ENCODE measurements at regions of chr1 and their contacts with region 1.

Region 1: GRCh38 chr1:204941421-204942338 is 71.0 kb downstream of the NFASC start:
- DNase-seq: peak; percentile 76
- H3K4me3 ChIP-seq: no peak overlapping the region
- H3K27ac ChIP-seq: no peak overlapping the region
- H3K4me1 ChIP-seq: no peaks in the 10 kb centered on the region
- H3K27me3 ChIP-seq: no peaks in the 10 kb centered on the region
- CTCF ChIP-seq: peak; percentile 91

Region 2: DNA sequence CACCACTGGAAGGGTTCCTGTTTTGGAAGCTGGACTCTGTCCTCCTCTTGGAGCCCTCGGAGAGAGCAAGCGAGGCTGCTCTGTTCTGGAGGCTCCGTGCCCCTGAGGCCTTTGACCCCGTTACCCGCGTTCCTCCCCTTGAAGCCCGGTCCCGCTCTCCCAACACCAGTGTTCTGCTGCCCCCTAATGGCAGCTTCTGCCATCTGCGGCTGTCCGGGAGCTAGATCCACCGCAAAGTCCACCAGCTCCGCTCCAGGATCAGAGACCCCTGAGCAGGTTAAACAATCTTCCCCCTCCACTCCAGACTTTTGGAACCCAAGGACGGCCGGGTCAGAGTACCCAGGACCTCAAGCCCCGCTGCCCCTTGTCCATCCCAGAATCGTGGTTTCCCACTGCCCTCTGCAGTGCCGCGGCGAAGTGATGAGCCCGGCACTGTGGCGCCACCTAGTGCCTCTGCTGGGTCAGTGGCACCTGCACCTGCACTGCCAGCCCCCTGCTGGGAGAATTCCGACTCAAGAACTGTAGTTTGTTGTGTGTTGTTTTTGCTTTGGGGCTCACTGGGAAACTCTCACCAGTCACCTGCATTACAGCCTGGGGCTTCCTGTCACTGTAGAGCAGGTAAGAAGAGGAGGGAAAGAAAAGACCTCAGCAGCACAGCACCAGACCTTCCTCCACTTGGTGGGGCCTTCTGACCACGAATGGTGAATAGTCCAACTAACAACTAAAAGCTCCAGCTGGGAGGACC is 134.6 kb before region 1 on chr1:
- intact Hi-C with region 1: loop called (anchors 2 kb)
- DNase-seq: peak; percentile 87
- H3K4me3 ChIP-seq: peak overlapping the region; percentile 26
- H3K27ac ChIP-seq: no peak overlapping the region
- H3K4me1 ChIP-seq: no peaks in the 10 kb centered on the region
- H3K27me3 ChIP-seq: no peaks in the 10 kb centered on the region
- CTCF ChIP-seq: peak; percentile 95

Region 3: DNA sequence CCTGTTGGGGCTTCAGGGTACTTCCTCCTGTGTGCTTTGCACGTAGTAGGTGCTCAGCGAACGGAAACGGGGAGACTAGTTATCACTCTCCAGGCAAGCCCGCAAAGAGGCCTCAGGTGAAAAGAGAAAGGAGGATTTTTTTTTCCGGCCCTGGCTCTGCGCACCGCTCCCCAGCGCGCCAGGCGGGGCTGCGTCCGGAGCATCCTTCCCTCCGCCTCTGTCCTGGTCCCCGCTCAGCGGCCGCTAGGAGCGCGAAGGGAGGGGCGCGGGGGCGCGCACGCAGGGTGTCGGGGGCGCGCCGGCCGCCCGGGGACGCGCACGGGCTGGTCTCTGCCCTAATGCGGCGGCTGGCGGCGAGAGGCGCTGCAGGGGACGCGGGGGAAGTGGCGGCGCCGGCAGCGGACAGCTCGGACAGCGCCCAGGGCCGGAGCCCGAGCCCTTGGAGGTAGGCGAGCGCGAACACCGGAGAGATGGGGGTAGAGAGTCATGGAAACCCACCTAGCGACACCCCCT is 113.3 kb before region 1 on chr1:
- intact Hi-C with region 1: loop called (anchors 5 kb)
- DNase-seq: peak; percentile 60
- H3K4me3 ChIP-seq: peak overlapping the region; percentile 15
- H3K27ac ChIP-seq: no peak overlapping the region
- H3K4me1 ChIP-seq: no peaks in the 10 kb centered on the region
- H3K27me3 ChIP-seq: peaks cover 7% of the 10 kb centered on the region
- CTCF ChIP-seq: no peak

Measured in colonic mucosa (tissue), 4 donors.